ENCODE measurements at regions of chr12 and their contacts with region 1.

Region 1: DNA sequence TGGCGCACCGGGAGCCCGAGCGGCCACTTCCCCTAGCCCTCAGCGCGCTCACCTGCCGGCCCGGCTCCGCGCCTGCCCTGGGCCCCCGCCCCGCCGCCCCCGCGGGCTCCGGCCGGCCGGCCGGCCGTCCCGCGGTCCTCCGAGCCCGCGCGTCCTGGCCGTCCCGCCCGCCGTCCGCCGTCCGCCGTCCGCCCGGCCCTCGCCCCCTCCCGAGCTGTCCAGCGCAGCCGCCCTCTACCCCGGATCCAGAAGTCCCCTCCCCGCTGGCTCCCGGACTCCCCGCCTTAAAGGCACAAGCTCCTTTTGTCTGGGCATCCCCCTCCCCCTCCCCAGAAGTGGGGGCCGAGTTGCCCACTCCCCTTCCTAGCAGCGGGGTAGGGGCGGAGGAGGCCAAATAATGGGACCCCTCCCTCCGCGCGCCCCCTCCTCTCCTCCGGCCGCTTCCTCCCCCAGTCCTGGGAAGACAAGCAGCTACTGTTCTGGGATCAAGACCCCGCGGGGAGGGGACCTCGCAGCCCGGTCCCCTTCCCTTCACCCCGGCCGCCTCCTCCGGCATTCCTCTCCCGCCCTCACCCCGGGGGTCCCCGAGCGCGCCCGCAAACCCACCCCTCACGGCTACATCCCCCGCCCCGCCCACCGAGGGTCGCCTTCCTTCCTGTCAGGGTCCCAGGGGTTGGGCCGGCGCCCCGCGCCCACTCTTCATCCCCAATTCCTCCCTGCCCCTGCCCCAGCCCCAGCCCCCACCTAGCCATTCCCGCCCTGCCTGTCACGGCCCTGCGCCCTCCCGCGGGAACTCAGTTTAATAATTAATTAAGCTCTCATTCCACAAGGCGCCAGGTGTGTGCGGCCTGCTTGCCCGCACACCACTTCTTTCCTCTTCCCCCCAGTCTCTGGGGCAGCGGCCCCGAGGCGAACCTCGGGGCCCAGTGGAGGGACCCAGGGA is at the start of gene ADCY6:
- DNase-seq: no peak
- ATAC-seq: no peak
- H3K4me3 Mint-ChIP-seq: no peak within 1 kb of the TSS
- H3K27ac Mint-ChIP-seq: no peak within 1 kb of the TSS
- H3K4me1 Mint-ChIP-seq: peaks cover 4% of the 10 kb centered on the region
- H3K27me3 Mint-ChIP-seq: peaks cover 57% of the 10 kb centered on the region
- total RNA-seq, gene ADCY6: 0.15 to 0.42 TPM

Region 2: DNA sequence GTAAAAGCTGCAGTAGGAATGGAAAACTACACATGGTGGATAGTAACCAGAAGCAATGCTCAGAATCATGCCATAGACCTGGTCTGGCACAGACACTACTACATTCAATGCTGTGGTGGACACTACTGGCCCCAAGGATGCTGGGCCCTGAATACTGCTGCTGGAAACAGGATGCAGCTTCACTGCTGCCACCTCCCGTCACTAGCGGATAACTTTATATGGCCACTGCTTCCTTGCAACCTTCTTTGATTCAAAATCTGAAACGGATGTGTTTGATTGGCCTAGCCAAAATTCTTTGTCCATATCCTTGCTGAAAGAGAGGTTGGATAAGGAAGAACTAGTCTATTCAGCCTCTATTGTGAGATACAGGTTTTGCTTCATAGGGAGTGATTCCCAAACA is 30.9 kb before region 1 on chr12:
- CTCF ChIA-PET with region 1: interaction called, 286 read pairs
- DNase-seq: no peak
- ATAC-seq: no peak
- H3K4me3 Mint-ChIP-seq: no peak overlapping the region
- H3K27ac Mint-ChIP-seq: no peak overlapping the region
- H3K4me1 Mint-ChIP-seq: no peaks in the 10 kb centered on the region
- H3K27me3 Mint-ChIP-seq: peaks cover 6% of the 10 kb centered on the region